Left lung (tissue), 14 donors: ENCODE measurements at regions of chr9 and their contacts with region 1.

Region 1: GRCh38 chr9:5425006-5425628 is 12.6 kb downstream of the PLGRKT start:
- DNase-seq: no peak
- ATAC-seq: peak; percentile 47
- H3K4me3 ChIP-seq: no peak overlapping the region
- H3K27ac ChIP-seq: no peak overlapping the region
- H3K4me1 ChIP-seq: no peaks in the 10 kb centered on the region
- H3K27me3 ChIP-seq: no peaks in the 10 kb centered on the region
- CTCF ChIP-seq: peak; percentile 31 to 40

Region 2: DNA sequence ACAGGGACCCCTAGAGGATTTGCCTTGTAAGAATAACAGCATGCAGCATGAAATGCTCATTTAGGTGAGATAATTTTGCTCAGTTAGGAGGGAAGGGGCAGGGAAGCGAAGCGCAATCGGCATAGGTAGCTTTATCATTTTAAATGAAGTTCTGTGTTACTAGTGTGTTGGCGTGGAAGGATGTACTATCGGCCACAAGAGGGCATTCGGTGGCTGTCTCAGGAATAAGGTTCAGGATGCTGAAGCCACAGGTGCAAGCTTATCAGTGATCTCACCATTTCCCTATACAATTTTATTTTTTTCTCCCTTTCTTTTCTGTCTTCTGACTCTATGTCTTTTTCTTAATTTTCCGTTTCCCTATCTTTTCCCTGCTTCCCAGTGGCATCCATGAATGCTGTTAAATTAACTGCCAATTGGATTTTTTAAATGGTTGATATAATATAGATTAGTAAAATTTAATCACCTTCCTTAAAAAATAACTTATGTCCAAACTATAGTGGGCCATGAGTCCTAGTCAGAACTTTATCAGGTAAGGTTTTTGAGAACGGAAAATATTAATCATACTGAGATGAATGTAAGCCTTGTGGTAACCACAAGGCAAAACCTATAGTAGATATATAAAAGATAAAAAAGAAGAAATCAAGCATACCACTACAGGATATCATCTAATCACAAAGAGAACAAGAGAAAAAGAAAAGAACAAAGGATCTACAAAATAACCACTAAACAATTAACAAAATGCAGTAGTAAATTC is 238.5 kb before region 1 on chr9:
- intact Hi-C with region 1: loop called in 1 of 2 experiments (anchors 10 kb)
- DNase-seq: peak in 2 of 4 donors; percentile 3 to 49
- ATAC-seq: peak; percentile 95
- H3K4me3 ChIP-seq: no peak overlapping the region
- H3K27ac ChIP-seq: no peak overlapping the region
- H3K4me1 ChIP-seq: no peaks in the 10 kb centered on the region
- H3K27me3 ChIP-seq: no peaks in the 10 kb centered on the region
- CTCF ChIP-seq: peak; percentile 59 to 69